Cardiac septum (tissue), 1 donor: ENCODE measurements at regions of chr15 and their contacts with region 1.

Region 1: GRCh38 chr15:56496635-56497034 is 31.7 kb upstream of the MNS1 start:
- DNase-seq: no peak

Region 2: DNA sequence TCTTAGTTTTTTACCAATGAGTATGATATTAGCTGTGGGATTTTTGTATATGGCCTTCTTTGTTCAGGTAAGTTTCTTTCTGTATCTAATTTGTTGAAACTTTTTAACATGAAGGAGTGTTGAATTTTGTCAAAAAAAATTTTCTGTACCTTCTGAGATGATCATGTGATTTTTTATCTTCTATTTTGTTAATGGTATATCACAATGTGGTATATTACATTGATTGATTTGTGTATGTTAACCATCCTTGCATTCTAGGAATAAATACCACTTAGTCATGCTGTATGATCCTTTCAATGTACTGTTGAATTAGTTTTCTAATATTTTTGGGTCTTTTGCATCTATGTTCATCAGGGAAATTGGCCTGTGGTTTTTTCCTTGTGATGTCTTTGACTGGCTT is 60.8 kb after region 1 on chr15:
- intact Hi-C with region 1: no loop called
- DNase-seq: no peak

Region 3: GRCh38 chr15:56653787-56654186 is 157.2 kb after region 1 on chr15:
- intact Hi-C with region 1: no loop called
- DNase-seq: no peak

Region 4: GRCh38 chr15:56869573-56869972 is 372.9 kb after region 1 on chr15:
- intact Hi-C with region 1: loop called (anchors 2 kb)
- DNase-seq: no peak